ENCODE measurements at regions of chr3 and their contacts with region 1.

Region 1: GRCh38 chr3:16332904-16333426 is 68.0 kb downstream of the OXNAD1 start:
- DNase-seq: no peak
- H3K4me3 ChIP-seq: no peak overlapping the region
- H3K4me3 Mint-ChIP-seq: peak overlapping the region in 1 of 8 donors; percentile 7
- H3K27ac ChIP-seq: no peak overlapping the region
- H3K27ac Mint-ChIP-seq: peak overlapping the region in 5 of 7 donors; percentile 4 to 90 (median 65)
- H3K4me1 ChIP-seq: peaks cover 13% of the 10 kb centered on the region
- H3K4me1 Mint-ChIP-seq: peaks cover 21 to 49% (median 28%) of the 10 kb centered on the region in 4 donors
- H3K27me3 ChIP-seq: no peaks in the 10 kb centered on the region
- H3K27me3 Mint-ChIP-seq: no peaks in the 10 kb centered on the region

Region 2: GRCh38 chr3:16319307-16319706 is 13.7 kb before region 1 on chr3:
- CTCF ChIA-PET with region 1: interaction called, 12 read pairs
- POLR2A ChIA-PET with region 1: interaction called, 27 read pairs
- intact Hi-C with region 1: no loop called
- DNase-seq: peak; percentile 79 to 89 (median 81)
- H3K4me3 ChIP-seq: no peak overlapping the region
- H3K4me3 Mint-ChIP-seq: peak overlapping the region in 6 of 8 donors; percentile 17 to 80 (median 36)
- H3K27ac ChIP-seq: peak overlapping the region; percentile 31
- H3K27ac Mint-ChIP-seq: peak overlapping the region; percentile 87 to 95 (median 93)
- H3K4me1 ChIP-seq: peaks cover 61% of the 10 kb centered on the region
- H3K4me1 Mint-ChIP-seq: peaks cover 53 to 79% (median 63%) of the 10 kb centered on the region in 4 donors
- H3K27me3 ChIP-seq: no peaks in the 10 kb centered on the region
- H3K27me3 Mint-ChIP-seq: no peaks in the 10 kb centered on the region

Region 3: DNA sequence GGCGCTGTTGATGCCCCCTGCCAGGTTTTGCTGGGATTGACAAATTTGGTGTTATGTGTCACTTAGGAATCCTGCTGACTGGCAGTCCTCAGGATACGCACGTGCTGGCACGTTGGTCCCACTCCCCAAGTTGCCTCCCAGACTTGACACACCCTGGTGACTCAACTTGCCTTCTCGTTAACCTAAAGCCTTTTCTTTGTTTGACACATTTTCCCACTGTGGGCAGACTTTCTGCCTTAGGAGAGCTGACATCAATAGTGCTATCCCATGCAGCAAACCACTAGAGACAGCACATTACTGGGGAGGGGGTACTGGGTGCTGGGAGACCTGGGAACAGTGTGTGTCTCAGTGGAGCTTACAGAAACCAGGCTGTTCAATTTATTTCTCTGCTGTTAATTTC is 36.3 kb after region 1 on chr3:
- CTCF ChIA-PET with region 1: no interaction called
- POLR2A ChIA-PET with region 1: no interaction called
- intact Hi-C with region 1: loop called (anchors 5 kb)
- DNase-seq: no peak
- H3K4me3 ChIP-seq: no peak overlapping the region
- H3K4me3 Mint-ChIP-seq: no peak overlapping the region
- H3K27ac ChIP-seq: no peak overlapping the region
- H3K27ac Mint-ChIP-seq: no peak overlapping the region
- H3K4me1 ChIP-seq: peaks cover 5% of the 10 kb centered on the region
- H3K4me1 Mint-ChIP-seq: peaks cover 15 to 46% (median 26%) of the 10 kb centered on the region in 4 donors
- H3K27me3 ChIP-seq: no peaks in the 10 kb centered on the region
- H3K27me3 Mint-ChIP-seq: no peaks in the 10 kb centered on the region